Activated naive CD4-positive, alpha-beta T cell treated with anti-CD3 and anti-CD28 coated beads, Interleukin-2, amount 10 ng/mL, durations not matched to agents 7 days and 5 days (primary cell): ENCODE measurements at regions of chr18 and their contacts with region 1.

Region 1: DNA sequence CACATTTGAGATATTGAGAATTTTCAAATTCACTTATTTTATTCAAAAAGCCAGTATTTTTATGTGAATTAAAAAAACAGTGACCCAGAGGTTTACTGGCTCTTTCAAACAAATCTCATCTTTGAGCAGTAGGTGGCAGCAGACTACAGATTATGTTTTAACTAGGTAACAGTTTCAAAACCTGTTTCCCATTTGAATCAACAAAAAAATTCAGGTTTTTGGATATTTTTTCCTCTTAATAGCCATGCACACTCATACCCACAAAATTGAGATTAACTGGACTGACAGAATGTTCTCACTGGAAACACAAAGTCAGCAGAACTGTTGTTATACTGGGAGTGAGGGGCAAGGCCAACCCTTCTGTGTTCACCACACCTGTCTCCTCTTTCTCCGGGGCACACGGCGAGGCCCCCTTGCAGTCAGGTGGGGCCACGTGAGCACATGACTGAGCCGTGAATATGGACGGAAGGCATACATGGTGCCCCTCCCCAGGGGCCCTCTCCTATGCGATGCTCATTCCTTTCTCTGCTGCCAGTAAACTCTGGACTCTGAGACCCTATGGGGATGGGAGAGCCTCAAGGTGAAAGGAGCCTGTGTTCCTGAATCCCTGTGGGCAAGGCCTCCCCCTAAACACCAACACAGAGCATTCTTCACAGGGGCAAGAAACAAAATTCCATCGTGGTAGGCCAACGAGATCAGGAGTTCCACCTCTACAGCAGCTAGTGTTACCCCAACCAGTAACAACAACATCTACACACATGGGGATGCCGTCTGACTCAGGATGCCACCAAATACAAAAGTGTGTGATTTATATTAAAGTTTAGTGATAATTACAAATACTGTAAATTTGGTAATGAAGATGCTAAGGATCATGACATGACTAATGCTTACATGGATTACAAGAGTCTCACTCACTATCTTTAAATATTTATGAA is 80.4 kb downstream of the LPIN2 start:
- DNase-seq: peak; percentile 54
- H3K4me3 Mint-ChIP-seq: no peak overlapping the region
- H3K27ac Mint-ChIP-seq: peak overlapping the region; percentile 57
- H3K4me1 Mint-ChIP-seq: peaks cover 23% of the 10 kb centered on the region
- H3K27me3 Mint-ChIP-seq: no peaks in the 10 kb centered on the region

Region 2: GRCh38 chr18:2881088-2881839 is 51.2 kb before region 1 on chr18:
- CTCF ChIA-PET with region 1: no interaction called
- DNase-seq: no peak
- H3K4me3 Mint-ChIP-seq: peak overlapping the region; percentile 62
- H3K27ac Mint-ChIP-seq: peak overlapping the region; percentile 89
- H3K4me1 Mint-ChIP-seq: peaks cover 39% of the 10 kb centered on the region
- H3K27me3 Mint-ChIP-seq: peaks cover 10% of the 10 kb centered on the region

Region 3: GRCh38 chr18:3016585-3017297 is 84.2 kb after region 1 on chr18:
- CTCF ChIA-PET with region 1: no interaction called
- DNase-seq: no peak
- H3K4me3 Mint-ChIP-seq: no peak overlapping the region
- H3K27ac Mint-ChIP-seq: peak overlapping the region; percentile 55
- H3K4me1 Mint-ChIP-seq: peaks cover 41% of the 10 kb centered on the region
- H3K27me3 Mint-ChIP-seq: peaks cover 9% of the 10 kb centered on the region

Region 4: DNA sequence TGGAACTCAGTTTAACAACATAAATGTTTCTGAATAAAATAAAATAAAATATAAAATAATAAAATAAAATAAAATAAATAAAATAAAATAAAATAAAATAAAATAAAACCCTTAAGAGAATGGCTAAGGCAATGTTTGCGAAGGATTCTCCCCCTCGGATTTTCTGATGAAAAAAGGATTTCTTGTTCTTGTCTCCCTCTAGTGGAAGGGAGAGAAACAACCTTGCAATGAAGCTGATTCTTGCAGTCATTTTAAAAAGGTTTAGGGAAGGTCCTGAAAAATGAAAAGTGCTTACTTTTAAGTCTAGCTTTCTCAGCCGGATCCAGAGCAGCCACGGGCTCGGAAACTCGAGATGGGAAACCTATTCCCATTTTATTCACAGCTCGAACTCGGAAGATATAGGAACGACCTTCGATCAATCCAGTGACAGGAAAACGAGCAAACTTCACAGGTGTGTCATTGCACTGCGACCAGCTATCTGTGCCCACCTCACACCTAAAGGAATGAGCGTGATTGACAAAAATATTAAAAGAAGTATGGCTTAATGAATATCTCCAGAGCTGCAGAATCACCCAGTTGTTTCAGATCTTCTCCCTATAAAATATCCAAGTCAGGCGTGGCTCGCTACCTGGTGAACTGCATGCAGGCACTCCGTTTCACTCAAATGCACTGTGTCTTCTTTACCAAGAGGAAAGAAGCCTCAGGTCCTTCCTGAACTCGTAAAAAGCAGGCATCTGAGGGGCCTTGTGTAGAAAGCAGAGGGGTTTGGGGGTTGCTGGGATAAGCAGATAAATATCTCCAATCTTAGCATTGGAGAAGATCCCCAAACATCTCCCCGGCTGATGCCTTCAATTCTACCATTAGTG is 219.1 kb after region 1 on chr18:
- CTCF ChIA-PET with region 1: interaction called, 20 read pairs
- DNase-seq: no peak
- H3K4me3 Mint-ChIP-seq: no peak overlapping the region
- H3K27ac Mint-ChIP-seq: no peak overlapping the region
- H3K4me1 Mint-ChIP-seq: peaks cover 6% of the 10 kb centered on the region
- H3K27me3 Mint-ChIP-seq: peaks cover 7% of the 10 kb centered on the region